ENCODE measurements at regions of chr18 and their contacts with region 1.

Region 1: DNA sequence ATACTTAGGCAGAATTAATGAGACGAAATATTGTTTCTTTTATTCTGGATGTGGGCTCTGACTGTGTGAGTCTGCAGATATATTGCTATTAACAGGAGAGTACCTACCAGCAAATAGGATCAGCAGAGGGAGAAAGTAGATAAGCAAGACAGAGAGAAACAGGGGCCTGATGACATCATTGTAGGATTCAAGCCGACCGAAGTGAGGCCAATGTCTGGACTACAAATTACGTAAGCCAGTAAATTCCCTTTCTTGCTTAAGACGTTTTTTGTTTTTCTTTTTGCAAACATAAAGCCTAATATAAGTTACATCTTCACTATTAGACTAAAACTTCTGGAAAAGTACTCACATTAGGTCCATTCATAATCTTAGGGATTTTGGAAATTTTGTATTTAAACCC is 21.4 kb upstream of the PTPRM start:
- DNase-seq: no peak
- H3K4me3 ChIP-seq: no peak overlapping the region
- H3K4me3 Mint-ChIP-seq: no peak overlapping the region
- H3K27ac Mint-ChIP-seq: no peak overlapping the region
- H3K4me1 ChIP-seq: no peaks in the 10 kb centered on the region
- H3K4me1 Mint-ChIP-seq: no peaks in the 10 kb centered on the region
- H3K27me3 ChIP-seq: no peaks in the 10 kb centered on the region
- H3K27me3 Mint-ChIP-seq: no peaks in the 10 kb centered on the region
- CTCF ChIP-seq: no peak

Region 2: GRCh38 chr18:7196421-7196820 is 349.3 kb before region 1 on chr18:
- CTCF ChIA-PET with region 1: no interaction called
- POLR2A ChIA-PET with region 1: no interaction called
- intact Hi-C with region 1: no loop called
- DNase-seq: peak in 1 of 2 experiments; percentile 41
- H3K4me3 ChIP-seq: no peak overlapping the region
- H3K4me3 Mint-ChIP-seq: no peak overlapping the region
- H3K27ac Mint-ChIP-seq: no peak overlapping the region
- H3K4me1 ChIP-seq: peaks cover 5% of the 10 kb centered on the region; the same call in 1 of the 2 replicates
- H3K4me1 Mint-ChIP-seq: no peaks in the 10 kb centered on the region
- H3K27me3 ChIP-seq: no peaks in the 10 kb centered on the region
- H3K27me3 Mint-ChIP-seq: no peaks in the 10 kb centered on the region
- CTCF ChIP-seq: peak; percentile 31 to 48

Region 3: GRCh38 chr18:7233134-7233810 is 312.5 kb before region 1 on chr18:
- CTCF ChIA-PET with region 1: no interaction called
- POLR2A ChIA-PET with region 1: no interaction called
- intact Hi-C with region 1: loop called (anchors 10 kb)
- DNase-seq: no peak
- H3K4me3 ChIP-seq: no peak overlapping the region
- H3K4me3 Mint-ChIP-seq: no peak overlapping the region
- H3K27ac Mint-ChIP-seq: no peak overlapping the region
- H3K4me1 ChIP-seq: no peaks in the 10 kb centered on the region; the same call in 1 of the 2 replicates
- H3K4me1 Mint-ChIP-seq: peaks cover 5% of the 10 kb centered on the region
- H3K27me3 ChIP-seq: no peaks in the 10 kb centered on the region
- H3K27me3 Mint-ChIP-seq: peaks cover 5% of the 10 kb centered on the region
- CTCF ChIP-seq: no peak

Region 4: GRCh38 chr18:7459851-7460770 is 85.6 kb before region 1 on chr18:
- CTCF ChIA-PET with region 1: no interaction called
- POLR2A ChIA-PET with region 1: no interaction called
- intact Hi-C with region 1: loop called (anchors 10 kb)
- DNase-seq: peak; percentile 14 to 54
- H3K4me3 ChIP-seq: no peak overlapping the region
- H3K4me3 Mint-ChIP-seq: peak overlapping the region; percentile 66
- H3K27ac Mint-ChIP-seq: peak overlapping the region; percentile 51
- H3K4me1 ChIP-seq: peaks cover 19% of the 10 kb centered on the region; the same call in 1 of the 2 replicates
- H3K4me1 Mint-ChIP-seq: peaks cover 19% of the 10 kb centered on the region
- H3K27me3 ChIP-seq: no peaks in the 10 kb centered on the region
- H3K27me3 Mint-ChIP-seq: no peaks in the 10 kb centered on the region
- CTCF ChIP-seq: no peak